Esophagus muscularis mucosa (tissue), 4 donors: ENCODE measurements at regions of chr12 and their contacts with region 1.

Region 1: GRCh38 chr12:4276524-4277204 is 3.1 kb downstream of the CCND2 start:
- DNase-seq: peak; percentile 95
- H3K4me3 ChIP-seq: peak overlapping the region; percentile 71 to 98 (median 76)
- H3K27ac ChIP-seq: peak overlapping the region; percentile 93 to 98 (median 97)
- H3K4me1 ChIP-seq: peaks cover 62 to 76% (median 74%) of the 10 kb centered on the region in 4 donors
- H3K27me3 ChIP-seq: peaks cover 0 to 4% (median 0%) of the 10 kb centered on the region in 4 donors
- CTCF ChIP-seq: peak; percentile 94 to 96 (median 94)
- EP300 ChIP-seq: no peak
- POLR2A ChIP-seq: no peak

Region 2: GRCh38 chr12:3872800-3873636 is 403.6 kb before region 1 on chr12 and contains the start of gene PARP11:
- intact Hi-C with region 1: loop called (anchors 5 kb)
- DNase-seq: peak; percentile 99
- H3K4me3 ChIP-seq: peak within 1 kb of the TSS; percentile 64 to 89 (median 72)
- H3K27ac ChIP-seq: peak within 1 kb of the TSS; percentile 91 to 95 (median 94)
- H3K4me1 ChIP-seq: peaks cover 18 to 37% (median 22%) of the 10 kb centered on the region in 4 donors
- H3K27me3 ChIP-seq: peaks cover 0 to 7% (median 0%) of the 10 kb centered on the region in 4 donors
- CTCF ChIP-seq: no peak
- EP300 ChIP-seq: no peak
- POLR2A ChIP-seq: no peak
- total RNA-seq, gene PARP11: 4.1 to 6.4 (median 4.8) TPM

Region 3: DNA sequence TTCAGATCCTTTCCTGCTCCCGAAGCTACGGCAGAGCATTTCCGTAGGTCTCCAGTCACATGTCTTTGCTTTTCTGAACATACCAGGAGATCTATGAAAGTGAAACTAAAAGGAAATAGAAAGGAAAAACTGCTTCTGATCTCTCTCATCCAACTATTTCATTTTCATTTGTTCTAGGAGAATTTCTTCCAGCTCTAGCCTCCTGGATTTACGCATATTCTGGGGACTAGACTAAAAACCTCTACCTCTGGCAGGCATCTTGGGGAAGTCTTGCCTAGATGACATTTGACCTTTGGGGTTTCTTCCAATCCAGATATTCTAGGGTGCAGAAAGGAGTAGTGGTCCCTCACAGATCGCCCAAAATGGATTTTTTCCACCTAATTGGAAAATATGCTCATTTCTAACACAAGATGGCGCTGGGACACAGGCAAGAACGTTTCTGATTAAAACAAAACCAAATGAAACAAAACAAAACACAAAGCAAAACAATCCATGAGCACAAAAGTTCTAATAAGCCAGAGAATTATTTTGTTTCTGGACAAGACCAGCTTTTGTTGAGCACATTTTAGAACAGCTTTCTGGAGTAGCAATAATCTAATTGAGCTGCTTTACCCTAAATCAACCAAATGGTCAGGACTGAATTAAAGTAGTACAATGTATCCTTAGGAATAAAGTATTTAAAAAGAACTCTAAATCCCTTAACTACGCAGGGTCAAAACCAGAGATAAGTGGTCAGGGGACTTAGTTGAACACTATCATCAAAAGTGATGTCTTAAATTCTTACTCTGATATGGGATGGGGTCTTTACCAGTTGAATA is 391.2 kb before region 1 on chr12:
- intact Hi-C with region 1: loop called (anchors 2 kb)
- DNase-seq: no peak
- H3K4me3 ChIP-seq: peak overlapping the region; percentile 36 to 51 (median 42)
- H3K27ac ChIP-seq: peak overlapping the region; percentile 57 to 73 (median 63)
- H3K4me1 ChIP-seq: peaks cover 0 to 10% (median 2%) of the 10 kb centered on the region in 4 donors
- H3K27me3 ChIP-seq: peaks cover 0 to 11% (median 2%) of the 10 kb centered on the region in 4 donors
- CTCF ChIP-seq: peak; percentile 74 to 88 (median 76)
- EP300 ChIP-seq: no peak
- POLR2A ChIP-seq: no peak

Region 4: GRCh38 chr12:3998968-3999826 is 277.5 kb before region 1 on chr12:
- intact Hi-C with region 1: loop called (anchors 2 kb)
- DNase-seq: no peak
- H3K4me3 ChIP-seq: no peak overlapping the region
- H3K27ac ChIP-seq: no peak overlapping the region
- H3K4me1 ChIP-seq: no peaks in the 10 kb centered on the region
- H3K27me3 ChIP-seq: peaks cover 0 to 5% (median 0%) of the 10 kb centered on the region in 4 donors
- CTCF ChIP-seq: no peak
- EP300 ChIP-seq: no peak
- POLR2A ChIP-seq: no peak

Region 5: GRCh38 chr12:4030929-4031702 is 245.5 kb before region 1 on chr12:
- intact Hi-C with region 1: loop called (anchors 2 kb)
- DNase-seq: peak; percentile 96
- H3K4me3 ChIP-seq: peak overlapping the region; percentile 60 to 66 (median 63)
- H3K27ac ChIP-seq: peak overlapping the region; percentile 84 to 91 (median 90)
- H3K4me1 ChIP-seq: peaks cover 5 to 19% (median 14%) of the 10 kb centered on the region in 4 donors
- H3K27me3 ChIP-seq: no peaks in the 10 kb centered on the region
- CTCF ChIP-seq: no peak
- EP300 ChIP-seq: no peak
- POLR2A ChIP-seq: peak; percentile 54

Region 6: DNA sequence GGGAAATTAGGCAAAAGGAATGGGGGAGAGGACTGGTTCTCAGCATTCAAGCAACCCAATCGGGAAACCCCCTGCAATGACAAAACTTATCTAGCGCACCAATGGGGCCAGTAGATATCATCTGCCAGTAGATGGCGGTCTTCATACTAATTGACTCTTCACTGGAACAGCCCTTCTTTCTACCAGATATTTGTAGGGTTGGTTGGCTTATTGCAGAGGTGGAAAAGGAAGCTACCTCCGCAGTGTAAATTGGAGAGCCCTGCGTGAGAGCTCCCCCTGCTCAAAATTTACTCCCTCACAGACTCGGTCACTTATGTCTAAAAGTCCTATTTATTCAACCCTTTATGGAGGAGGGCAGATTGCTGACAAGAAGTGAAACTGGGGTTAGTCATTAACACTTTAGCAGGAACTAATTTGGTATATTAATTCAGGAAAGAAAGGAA is 169.2 kb before region 1 on chr12:
- intact Hi-C with region 1: loop called (anchors 1 kb)
- DNase-seq: no peak
- H3K4me3 ChIP-seq: no peak overlapping the region
- H3K27ac ChIP-seq: no peak overlapping the region
- H3K4me1 ChIP-seq: no peaks in the 10 kb centered on the region
- H3K27me3 ChIP-seq: peaks cover 0 to 30% (median 0%) of the 10 kb centered on the region in 4 donors
- CTCF ChIP-seq: peak; percentile 60 to 70 (median 60)
- EP300 ChIP-seq: no peak
- POLR2A ChIP-seq: no peak

Region 7: GRCh38 chr12:4215229-4216186 is 61.2 kb before region 1 on chr12:
- intact Hi-C with region 1: no loop called
- DNase-seq: peak; percentile 91
- H3K4me3 ChIP-seq: no peak overlapping the region
- H3K27ac ChIP-seq: no peak overlapping the region
- H3K4me1 ChIP-seq: no peaks in the 10 kb centered on the region
- H3K27me3 ChIP-seq: peaks cover 0 to 9% (median 0%) of the 10 kb centered on the region in 4 donors
- CTCF ChIP-seq: no peak
- EP300 ChIP-seq: no peak
- POLR2A ChIP-seq: no peak

Region 8: DNA sequence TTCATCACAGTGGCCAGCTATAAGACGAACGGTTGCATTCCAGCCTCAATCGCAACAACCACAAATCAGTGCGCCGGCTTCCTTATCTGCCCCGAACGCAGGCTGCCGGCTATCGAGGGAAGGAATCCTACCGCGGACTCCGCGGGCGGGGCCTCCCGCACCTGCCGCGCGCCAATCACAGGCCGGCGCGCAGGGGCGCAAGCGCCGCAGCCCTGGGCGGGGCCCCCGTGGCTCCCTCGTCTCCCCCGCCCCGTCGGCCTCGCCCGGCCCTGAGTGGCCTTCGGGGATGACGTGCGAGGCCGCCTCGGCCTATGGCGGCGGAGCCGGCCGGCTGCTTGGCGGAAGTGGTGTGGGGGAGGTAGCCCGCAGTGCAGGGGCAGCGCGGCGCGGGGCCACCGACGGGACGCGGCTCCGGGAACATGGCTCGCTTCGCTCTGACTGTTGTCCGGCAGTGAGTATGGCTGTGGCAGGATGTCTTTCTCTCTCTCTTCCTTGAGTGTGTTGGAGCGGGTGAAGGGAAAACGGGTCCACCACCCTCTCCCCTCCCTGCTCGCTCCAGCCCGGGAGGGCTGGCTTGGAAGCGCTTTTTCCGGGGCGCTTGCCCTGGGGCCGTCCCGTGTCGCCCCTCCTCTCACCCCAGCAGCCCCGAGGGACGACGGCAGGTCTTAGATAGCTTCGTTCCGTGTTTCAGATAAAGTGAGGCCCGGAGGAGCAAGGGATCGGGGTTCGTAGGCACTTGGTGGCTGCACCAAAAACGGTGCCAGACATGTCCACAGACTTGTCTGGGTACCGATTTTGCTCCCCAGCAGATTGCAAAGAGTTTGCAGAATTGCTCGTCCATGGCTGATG is 44.4 kb after region 1 on chr12 and contains the start of gene TIGAR:
- intact Hi-C with region 1: no loop called
- DNase-seq: peak; percentile 96
- H3K4me3 ChIP-seq: peak within 1 kb of the TSS; percentile 74 to 93 (median 82)
- H3K27ac ChIP-seq: peak within 1 kb of the TSS; percentile 84 to 98 (median 92)
- H3K4me1 ChIP-seq: peaks cover 12 to 43% (median 33%) of the 10 kb centered on the region in 4 donors
- H3K27me3 ChIP-seq: no peaks in the 10 kb centered on the region
- CTCF ChIP-seq: peak in 1 of 3 experiments; percentile 20
- EP300 ChIP-seq: no peak
- POLR2A ChIP-seq: peak; percentile 88
- total RNA-seq, gene TIGAR: 6.6 to 7.6 (median 7.4) TPM

Region 9: GRCh38 chr12:4356041-4356327 is 79.3 kb after region 1 on chr12:
- intact Hi-C with region 1: no loop called
- DNase-seq: no peak
- H3K4me3 ChIP-seq: no peak overlapping the region
- H3K27ac ChIP-seq: no peak overlapping the region
- H3K4me1 ChIP-seq: peaks cover 0 to 3% (median 0%) of the 10 kb centered on the region in 4 donors
- H3K27me3 ChIP-seq: no peaks in the 10 kb centered on the region
- CTCF ChIP-seq: peak in 2 of 3 experiments; percentile 25 to 44
- EP300 ChIP-seq: no peak
- POLR2A ChIP-seq: no peak

Region 10: DNA sequence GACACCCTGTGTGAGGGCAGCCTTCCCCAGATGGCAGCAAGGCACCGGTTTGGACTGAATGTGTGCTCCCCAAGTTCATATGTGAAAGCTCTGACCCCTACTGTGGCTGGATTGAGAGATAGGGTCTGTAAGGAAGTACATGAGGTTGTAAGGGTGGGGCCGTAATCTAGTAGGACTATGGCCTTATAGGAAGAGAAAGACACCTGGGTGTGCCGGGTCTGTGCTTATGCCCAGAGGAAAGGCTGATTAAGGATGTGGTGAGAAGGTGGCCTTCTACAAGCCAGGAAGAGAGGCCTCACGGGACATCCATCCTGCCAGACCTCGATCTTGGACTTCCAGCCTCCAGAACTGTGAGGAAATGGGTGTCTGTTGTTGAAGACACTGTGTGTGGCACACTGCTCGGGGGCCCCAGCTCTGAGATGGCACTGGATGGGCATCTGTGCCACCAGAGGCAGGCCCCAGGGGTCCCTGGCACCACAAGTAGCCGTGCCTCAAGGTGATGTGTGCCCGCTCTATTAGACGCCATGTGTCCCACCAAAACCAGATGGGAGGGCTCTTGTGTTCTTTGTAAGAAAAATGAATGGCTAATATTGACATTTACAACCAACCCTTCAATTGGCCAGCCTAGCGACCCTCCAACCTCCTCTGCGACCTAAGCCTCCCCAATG is 147.0 kb after region 1 on chr12:
- intact Hi-C with region 1: no loop called
- DNase-seq: no peak
- H3K4me3 ChIP-seq: no peak overlapping the region
- H3K27ac ChIP-seq: no peak overlapping the region
- H3K4me1 ChIP-seq: peaks cover 0 to 6% (median 2%) of the 10 kb centered on the region in 4 donors
- H3K27me3 ChIP-seq: no peaks in the 10 kb centered on the region
- CTCF ChIP-seq: no peak
- EP300 ChIP-seq: no peak
- POLR2A ChIP-seq: no peak